Left ventricle myocardium superior (tissue), 1 donor: ENCODE measurements at regions of chr13 and their contacts with region 1.

Region 1: GRCh38 chr13:34214686-34215085 is 396.7 kb downstream of the RFC3 start:
- DNase-seq: no peak
- ATAC-seq: no peak

Region 2: GRCh38 chr13:34733736-34734135 is 519.0 kb after region 1 on chr13:
- intact Hi-C with region 1: loop called (anchors 10 kb)
- DNase-seq: no peak
- ATAC-seq: peak; percentile 36